ENCODE measurements at regions of chr16 and their contacts with region 1.

Region 1: DNA sequence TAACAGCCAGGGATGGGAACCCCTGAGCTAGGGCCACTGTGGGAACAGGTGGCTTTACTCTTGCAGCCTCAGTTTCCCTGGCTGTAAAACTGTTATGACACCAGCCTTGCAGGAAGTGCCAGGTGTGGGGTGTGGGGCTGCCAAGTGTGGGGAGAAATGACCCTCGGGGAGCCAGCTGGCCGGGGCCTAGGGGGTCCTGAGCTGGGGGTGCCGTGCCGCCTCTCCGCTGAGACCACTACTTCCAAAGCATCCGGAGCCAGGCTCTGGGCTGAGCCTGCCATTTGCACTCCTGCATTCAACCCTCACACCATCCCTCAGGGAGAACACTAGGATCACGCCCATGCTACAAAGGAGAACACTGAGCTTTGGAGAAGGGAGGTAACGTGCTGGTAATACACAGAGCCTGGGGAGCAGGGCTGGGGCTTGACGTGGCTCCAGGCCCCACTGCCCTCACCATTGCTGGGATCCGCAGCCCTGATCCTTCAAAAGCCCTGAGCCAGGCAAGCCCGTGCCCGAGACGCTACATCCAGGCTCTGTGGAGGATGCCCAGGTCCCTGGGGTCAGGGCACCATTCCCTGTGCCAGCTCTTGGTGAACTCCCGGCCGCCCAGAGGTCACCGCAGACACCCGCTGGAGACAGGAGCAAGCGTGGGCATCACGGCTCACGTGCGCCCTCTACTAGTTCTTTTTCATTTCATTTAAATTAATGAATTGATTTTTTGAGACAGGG is 28.8 kb upstream of the GINS2 start:
- DNase-seq: peak; percentile 88
- H3K4me3 Mint-ChIP-seq: no peak overlapping the region
- H3K27ac Mint-ChIP-seq: no peak overlapping the region
- H3K4me1 Mint-ChIP-seq: peaks cover 3% of the 10 kb centered on the region
- H3K27me3 Mint-ChIP-seq: peaks cover 16% of the 10 kb centered on the region

Region 2: GRCh38 chr16:85303357-85303901 is 414.1 kb before region 1 on chr16:
- intact Hi-C with region 1: loop called (anchors 5 kb)
- DNase-seq: peak; percentile 95
- H3K4me3 Mint-ChIP-seq: peak overlapping the region; percentile 86
- H3K27ac Mint-ChIP-seq: peak overlapping the region; percentile 77
- H3K4me1 Mint-ChIP-seq: peaks cover 33% of the 10 kb centered on the region
- H3K27me3 Mint-ChIP-seq: peaks cover 2% of the 10 kb centered on the region

Region 3: GRCh38 chr16:85393674-85394483 is 323.7 kb before region 1 on chr16:
- intact Hi-C with region 1: loop called (anchors 2 kb)
- DNase-seq: peak; percentile 89
- H3K4me3 Mint-ChIP-seq: no peak overlapping the region
- H3K27ac Mint-ChIP-seq: no peak overlapping the region
- H3K4me1 Mint-ChIP-seq: no peaks in the 10 kb centered on the region
- H3K27me3 Mint-ChIP-seq: no peaks in the 10 kb centered on the region

Region 4: DNA sequence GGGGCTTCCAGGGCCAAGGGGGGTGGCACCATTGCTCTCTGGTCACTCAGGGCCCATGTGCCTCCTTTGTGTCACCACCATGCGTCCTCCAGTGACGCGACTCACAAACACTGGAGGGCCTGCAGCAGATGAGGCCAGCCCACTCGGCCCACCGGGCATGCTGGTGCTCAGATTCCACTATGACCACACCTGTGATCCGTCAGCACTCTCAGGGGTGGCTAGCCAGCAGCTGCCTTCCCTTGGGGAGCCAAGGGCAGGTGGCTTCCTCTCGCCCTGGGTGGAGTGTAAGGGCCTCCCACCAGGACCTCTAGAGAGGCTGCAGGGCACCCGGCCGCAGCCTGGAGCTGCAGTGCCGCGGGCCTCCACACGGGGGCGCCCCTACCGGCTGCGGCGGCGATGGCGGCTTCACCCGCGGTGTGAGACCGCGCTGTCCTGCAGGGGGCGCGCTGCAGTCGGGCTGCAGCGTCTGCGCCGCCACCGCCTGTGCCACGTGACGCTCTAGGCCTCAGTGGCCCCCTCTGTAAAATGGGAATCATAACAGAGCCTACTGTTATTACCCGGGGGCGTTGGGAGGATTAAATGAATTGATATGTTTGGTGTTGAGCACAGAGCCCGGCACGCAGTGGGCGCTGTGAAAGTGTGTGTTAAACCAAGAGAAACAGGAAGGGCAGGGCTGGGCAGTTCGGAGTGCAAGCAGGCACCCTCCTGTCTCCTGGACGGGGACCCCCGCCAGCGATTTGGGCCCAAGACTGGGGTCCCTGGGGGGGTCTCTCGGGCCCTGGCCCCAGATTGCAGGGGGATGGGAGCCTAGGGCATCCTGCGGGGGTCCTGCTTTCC is 296.8 kb before region 1 on chr16:
- intact Hi-C with region 1: loop called (anchors 2 kb)
- DNase-seq: peak; percentile 94
- H3K4me3 Mint-ChIP-seq: no peak overlapping the region
- H3K27ac Mint-ChIP-seq: peak overlapping the region; percentile 43
- H3K4me1 Mint-ChIP-seq: peaks cover 2% of the 10 kb centered on the region
- H3K27me3 Mint-ChIP-seq: peaks cover 4% of the 10 kb centered on the region

Region 5: DNA sequence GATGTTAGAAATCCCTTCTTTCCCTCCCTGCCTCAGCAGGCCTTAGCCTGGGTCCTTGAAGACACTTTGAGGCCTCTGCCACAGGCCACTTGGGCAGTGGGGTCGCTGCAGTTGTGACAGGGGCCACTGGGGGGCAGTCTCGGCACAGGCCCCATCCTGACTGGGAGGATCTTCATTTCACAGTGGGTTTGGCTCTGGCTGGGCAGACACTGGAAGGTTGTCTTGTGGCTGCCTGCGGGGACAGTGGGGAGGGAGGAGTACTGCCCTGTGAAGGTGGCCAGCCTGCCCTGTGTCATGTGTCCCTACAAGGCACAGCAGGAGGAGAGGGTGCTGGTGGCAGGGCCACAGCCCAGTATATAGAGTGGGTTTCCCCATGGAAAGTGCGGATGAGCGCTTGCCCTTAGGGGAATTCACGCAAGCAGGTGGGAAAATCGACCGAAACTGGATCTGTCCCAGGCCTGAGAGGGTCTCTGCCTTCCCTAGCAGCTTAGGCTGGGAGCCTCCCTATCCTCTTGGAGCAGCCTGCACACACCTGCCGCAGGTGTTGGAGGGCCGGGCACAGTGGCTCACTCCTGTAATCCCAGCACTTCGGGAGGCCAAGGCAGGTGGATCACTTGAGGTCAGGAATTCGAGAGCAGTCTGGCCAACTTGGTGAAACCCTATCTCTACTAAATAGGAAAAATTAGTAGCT is 57.6 kb before region 1 on chr16:
- intact Hi-C with region 1: loop called (anchors 1 kb)
- DNase-seq: peak; percentile 88
- H3K4me3 Mint-ChIP-seq: no peak overlapping the region
- H3K27ac Mint-ChIP-seq: peak overlapping the region; percentile 41
- H3K4me1 Mint-ChIP-seq: peaks cover 3% of the 10 kb centered on the region
- H3K27me3 Mint-ChIP-seq: no peaks in the 10 kb centered on the region

Region 6: GRCh38 chr16:85688586-85689284 is 28.8 kb before region 1 on chr16 and contains the start of gene GINS2:
- intact Hi-C with region 1: no loop called
- DNase-seq: peak; percentile 97
- H3K4me3 Mint-ChIP-seq: peak within 1 kb of the TSS; percentile 84
- H3K27ac Mint-ChIP-seq: peak within 1 kb of the TSS; percentile 78
- H3K4me1 Mint-ChIP-seq: peaks cover 17% of the 10 kb centered on the region
- H3K27me3 Mint-ChIP-seq: peaks cover 5% of the 10 kb centered on the region
- total RNA-seq, gene GINS2: 87.4 and 93.0 TPM in 2 replicates

Region 7: GRCh38 chr16:85735225-85735635 is 17.7 kb after region 1 on chr16:
- intact Hi-C with region 1: no loop called
- DNase-seq: peak; percentile 77
- H3K4me3 Mint-ChIP-seq: peak overlapping the region; percentile 39
- H3K27ac Mint-ChIP-seq: no peak overlapping the region
- H3K4me1 Mint-ChIP-seq: peaks cover 6% of the 10 kb centered on the region
- H3K27me3 Mint-ChIP-seq: no peaks in the 10 kb centered on the region

Measured in activated CD4-positive, alpha-beta T cell treated with anti-CD3 and anti-CD28 coated beads, Interleukin-2, amount 10 ng/mL, durations not matched to agents 24 days and 14 days (primary cell).